ENCODE measurements at regions of chr15 and their contacts with region 1.

Region 1: DNA sequence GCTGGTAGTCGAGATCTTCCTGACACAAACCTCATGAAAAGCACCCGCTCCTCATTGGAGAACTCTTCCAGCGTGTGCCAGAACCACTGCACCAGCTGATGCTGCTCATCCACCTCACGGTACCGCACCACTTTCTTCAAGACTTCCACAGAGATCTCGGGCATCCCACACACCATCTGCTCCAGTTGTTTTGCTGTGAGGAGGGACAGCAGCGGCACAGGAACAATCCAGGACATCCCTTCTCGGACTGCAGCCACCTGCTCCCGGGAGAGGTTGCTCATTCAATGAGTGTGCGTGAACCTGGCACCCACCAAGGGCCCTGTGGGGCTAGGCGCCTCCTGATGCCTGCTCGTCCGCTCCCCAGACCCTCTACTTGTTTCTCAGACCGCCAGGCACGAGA is 15.1 kb downstream of the FBXL22 start:
- DNase-seq: no peak
- H3K27ac ChIP-seq: no peak overlapping the region
- CTCF ChIP-seq: no peak

Region 2: GRCh38 chr15:63038926-63039673 is 573.2 kb before region 1 on chr15:
- CTCF ChIA-PET with region 1: no interaction called
- POLR2A ChIA-PET with region 1: no interaction called
- DNase-seq: no peak
- H3K27ac ChIP-seq: no peak overlapping the region
- CTCF ChIP-seq: no peak

Region 3: GRCh38 chr15:63791228-63791627 is 178.9 kb after region 1 on chr15:
- CTCF ChIA-PET with region 1: no interaction called
- POLR2A ChIA-PET with region 1: no interaction called
- DNase-seq: no peak
- H3K27ac ChIP-seq: no peak overlapping the region
- CTCF ChIP-seq: no peak

Region 4: GRCh38 chr15:64197425-64197824 is 585.1 kb after region 1 on chr15:
- CTCF ChIA-PET with region 1: no interaction called
- POLR2A ChIA-PET with region 1: interaction called, 10 read pairs
- DNase-seq: no peak
- H3K27ac ChIP-seq: no peak overlapping the region
- CTCF ChIP-seq: no peak